Right ventricle myocardium inferior (tissue), 1 donor: ENCODE measurements at regions of chr1 and their contacts with region 1.

Region 1: GRCh38 chr1:115138968-115139367 is 49.7 kb upstream of the TSPAN2 start:
- DNase-seq: peak; percentile 90
- ATAC-seq: peak; percentile 92

Region 2: GRCh38 chr1:115275212-115275611 is 136.2 kb after region 1 on chr1:
- intact Hi-C with region 1: loop called (anchors 10 kb)
- DNase-seq: no peak
- ATAC-seq: no peak

Region 3: GRCh38 chr1:115469703-115470476 is 330.9 kb after region 1 on chr1:
- intact Hi-C with region 1: loop called (anchors 2 kb)
- DNase-seq: no peak
- ATAC-seq: peak; percentile 63